Mucosa of descending colon (tissue), 3 donors: ENCODE measurements at regions of chr17 and their contacts with region 1.

Region 1: GRCh38 chr17:71472809-71473789 is 647.7 kb upstream of the SOX9 start:
- DNase-seq: peak in 1 of 3 donors; percentile 38
- ATAC-seq: peak; percentile 84
- H3K4me3 ChIP-seq: no peak overlapping the region
- H3K4me1 ChIP-seq: no peaks in the 10 kb centered on the region
- CTCF ChIP-seq: peak; percentile 32

Region 2: DNA sequence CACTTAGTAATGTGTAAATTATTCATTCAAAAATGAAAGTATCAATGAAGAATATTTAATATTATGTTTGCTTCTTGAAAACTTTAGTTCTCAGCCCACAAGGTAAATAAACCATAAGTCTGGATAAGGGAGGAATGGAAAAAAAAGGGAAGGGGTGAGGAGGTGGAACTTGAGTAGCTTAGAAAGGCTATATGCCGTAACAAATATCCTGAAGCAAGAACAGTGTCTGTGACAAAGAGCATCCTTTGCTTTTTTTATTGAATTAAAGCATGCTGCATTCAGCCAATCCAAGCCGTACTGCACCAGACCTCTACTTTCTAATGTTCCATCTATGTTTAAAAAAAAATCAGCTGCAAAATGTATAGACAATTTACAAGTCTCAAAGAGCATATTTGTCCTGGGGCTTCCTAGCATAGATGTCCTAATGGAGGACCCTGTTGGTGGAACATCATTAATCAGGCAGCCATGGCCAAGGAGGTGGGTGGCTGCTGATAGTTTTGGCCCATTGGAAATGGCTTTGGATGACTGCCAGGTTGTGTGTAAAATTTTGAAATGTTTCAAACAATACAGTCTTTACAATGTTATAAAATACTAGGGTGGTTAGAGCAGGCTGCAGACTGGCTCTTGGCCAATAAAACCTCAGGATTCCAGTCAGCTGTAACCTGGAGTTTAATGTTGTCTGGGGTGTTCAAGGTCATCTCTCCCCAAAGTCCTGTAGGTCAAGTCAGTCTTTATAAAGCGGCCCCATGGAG is 248.1 kb before region 1 on chr17:
- intact Hi-C with region 1: no loop called
- DNase-seq: peak in 1 of 3 donors; percentile 49
- ATAC-seq: peak; percentile 47
- H3K4me3 ChIP-seq: no peak overlapping the region
- H3K4me1 ChIP-seq: no peaks in the 10 kb centered on the region
- CTCF ChIP-seq: no peak

Region 3: GRCh38 chr17:71748872-71749271 is 275.8 kb after region 1 on chr17:
- intact Hi-C with region 1: no loop called
- DNase-seq: no peak
- ATAC-seq: no peak
- H3K4me3 ChIP-seq: no peak overlapping the region
- H3K4me1 ChIP-seq: no peaks in the 10 kb centered on the region
- CTCF ChIP-seq: no peak

Region 4: GRCh38 chr17:71760062-71760720 is 287.1 kb after region 1 on chr17:
- intact Hi-C with region 1: loop called in 1 of 2 experiments (anchors 2 kb)
- DNase-seq: peak in 1 of 3 donors; percentile 54
- ATAC-seq: no peak
- H3K4me3 ChIP-seq: no peak overlapping the region
- H3K4me1 ChIP-seq: no peaks in the 10 kb centered on the region
- CTCF ChIP-seq: no peak

Region 5: GRCh38 chr17:72120642-72121163 is 647.6 kb after region 1 on chr17 and contains the start of gene SOX9:
- intact Hi-C with region 1: loop called in 1 of 2 experiments (anchors 10 kb)
- DNase-seq: peak; percentile 89 to 90 (median 89)
- ATAC-seq: peak; percentile 81
- H3K4me3 ChIP-seq: peak within 1 kb of the TSS; percentile 74
- H3K4me1 ChIP-seq: peaks cover 14% of the 10 kb centered on the region
- CTCF ChIP-seq: no peak
- total RNA-seq, gene SOX9: 17.2 to 46.0 (median 39.8) TPM